Tibial artery (tissue), 4 donors: ENCODE measurements at regions of chr9 and their contacts with region 1.

Region 1: GRCh38 chr9:120348951-120349429 is 231.0 kb downstream of the CDK5RAP2 start:
- DNase-seq: no peak
- H3K4me3 ChIP-seq: no peak overlapping the region
- H3K27ac ChIP-seq: no peak overlapping the region
- H3K4me1 ChIP-seq: no peaks in the 10 kb centered on the region
- H3K27me3 ChIP-seq: no peaks in the 10 kb centered on the region
- CTCF ChIP-seq: peak; percentile 9 to 22

Region 2: GRCh38 chr9:120284791-120285190 is 64.2 kb before region 1 on chr9:
- intact Hi-C with region 1: no loop called
- DNase-seq: no peak
- H3K4me3 ChIP-seq: no peak overlapping the region
- H3K27ac ChIP-seq: no peak overlapping the region
- H3K4me1 ChIP-seq: no peaks in the 10 kb centered on the region
- H3K27me3 ChIP-seq: no peaks in the 10 kb centered on the region
- CTCF ChIP-seq: no peak

Region 3: DNA sequence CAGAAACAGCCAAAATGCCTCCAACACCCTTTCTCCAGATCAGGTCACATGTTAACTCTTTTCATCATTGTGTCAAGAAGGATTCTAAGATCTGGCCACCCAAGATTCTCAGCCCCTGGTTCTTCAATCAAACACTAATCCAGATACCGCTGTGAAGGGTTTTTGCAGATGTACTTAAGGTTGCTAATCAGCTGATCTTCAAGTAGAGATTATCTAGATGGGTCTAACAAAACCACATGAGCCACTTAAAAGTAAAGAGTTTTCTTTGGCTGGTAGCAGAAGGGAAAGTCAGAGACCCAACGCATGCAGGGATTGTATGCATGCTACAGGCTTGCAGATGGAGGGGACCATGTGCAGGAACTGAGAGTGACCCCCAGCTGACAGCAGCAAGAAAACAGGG is 37.0 kb before region 1 on chr9:
- intact Hi-C with region 1: loop called (anchors 1 kb)
- DNase-seq: no peak
- H3K4me3 ChIP-seq: no peak overlapping the region
- H3K27ac ChIP-seq: no peak overlapping the region
- H3K4me1 ChIP-seq: no peaks in the 10 kb centered on the region
- H3K27me3 ChIP-seq: no peaks in the 10 kb centered on the region
- CTCF ChIP-seq: no peak